PC-9 (cell line): ENCODE measurements at regions of chr6 and their contacts with region 1.

Region 1: DNA sequence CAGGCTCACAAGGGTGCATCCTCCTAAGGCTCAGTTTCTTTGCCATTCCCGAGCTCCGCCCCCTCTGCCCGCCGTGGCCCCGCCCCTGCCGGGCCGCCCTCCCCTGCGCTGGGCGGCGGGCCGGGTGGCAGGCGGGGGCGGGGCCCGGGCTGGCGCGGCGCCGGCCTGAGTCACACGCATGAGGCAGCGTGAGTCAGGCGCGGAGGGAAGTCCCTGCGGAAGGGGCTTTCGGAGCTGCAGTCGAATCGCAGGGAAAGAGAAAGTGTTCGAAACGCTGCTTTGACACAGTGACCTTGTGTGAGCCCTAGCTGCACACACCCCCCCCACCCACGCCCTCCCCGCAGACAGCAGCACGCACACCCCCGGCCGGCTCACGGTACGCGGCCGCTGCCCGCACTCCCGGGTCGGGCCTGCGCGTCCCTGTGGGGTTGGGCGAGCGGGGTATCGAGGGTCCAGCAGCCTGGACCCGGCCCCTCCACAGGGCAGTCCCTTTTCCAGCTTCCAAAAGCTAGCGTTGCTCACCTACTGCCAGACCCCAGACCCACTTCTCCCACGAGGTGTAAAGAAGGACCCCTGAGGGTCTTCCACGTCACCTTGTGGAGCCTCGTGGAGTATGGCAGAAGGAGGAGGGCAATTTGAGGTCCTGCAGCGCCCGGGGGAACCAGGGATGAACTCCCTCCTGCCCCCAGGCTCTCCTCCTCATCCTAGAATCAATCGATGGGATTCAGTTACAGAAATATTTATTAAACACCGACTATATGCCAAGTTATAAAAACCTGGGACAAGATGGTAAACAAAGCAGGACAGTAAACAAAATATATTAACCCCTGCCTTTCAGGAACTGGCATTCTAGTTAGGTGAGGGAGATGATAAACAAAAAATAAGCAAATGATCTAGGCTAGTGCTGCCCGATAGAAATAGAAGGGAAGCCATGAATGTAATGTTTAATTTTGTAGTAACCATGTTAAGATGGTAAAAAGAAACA is 12.4 kb upstream of the HMGA1 start:
- DNase-seq: peak; percentile 90 to 93
- H3K4me3 ChIP-seq: peak overlapping the region; percentile 80
- H3K27ac ChIP-seq: peak overlapping the region; percentile 98
- H3K4me1 ChIP-seq: peaks cover 60% of the 10 kb centered on the region
- H3K27me3 ChIP-seq: no peaks in the 10 kb centered on the region
- CTCF ChIP-seq: no peak

Region 2: DNA sequence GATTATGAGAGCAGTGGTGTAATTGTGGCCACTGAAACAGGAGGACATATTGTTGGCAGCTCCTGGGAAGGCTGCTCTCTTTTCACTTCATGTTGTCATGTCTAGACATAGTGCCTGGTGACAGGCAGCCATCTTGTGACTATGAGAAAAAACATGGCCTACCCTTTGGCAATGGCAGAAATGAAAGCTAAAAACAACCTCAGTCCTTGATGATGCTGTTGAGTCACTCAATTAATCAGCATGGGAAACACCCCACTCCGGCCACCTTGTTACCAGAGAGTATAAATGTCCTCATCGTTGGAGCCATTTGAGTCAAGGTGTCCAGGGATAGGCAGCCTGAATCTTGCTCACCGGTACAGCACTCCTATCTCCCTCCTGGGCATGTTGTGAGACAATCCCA is 18.8 kb before region 1 on chr6:
- CTCF ChIA-PET with region 1: no interaction called
- POLR2A ChIA-PET with region 1: interaction called, 13 read pairs
- intact Hi-C with region 1: no loop called
- DNase-seq: no peak
- H3K4me3 ChIP-seq: no peak overlapping the region
- H3K27ac ChIP-seq: no peak overlapping the region
- H3K4me1 ChIP-seq: no peaks in the 10 kb centered on the region
- H3K27me3 ChIP-seq: no peaks in the 10 kb centered on the region
- CTCF ChIP-seq: no peak

Region 3: GRCh38 chr6:34656378-34657036 is 432.3 kb after region 1 on chr6:
- CTCF ChIA-PET with region 1: no interaction called
- POLR2A ChIA-PET with region 1: no interaction called
- intact Hi-C with region 1: no loop called
- DNase-seq: peak in 1 of 2 experiments; percentile 68
- H3K4me3 ChIP-seq: peak overlapping the region; percentile 54; the same call in 1 of the 2 replicates
- H3K27ac ChIP-seq: peak overlapping the region; percentile 96
- H3K4me1 ChIP-seq: peaks cover 54% of the 10 kb centered on the region
- H3K27me3 ChIP-seq: no peaks in the 10 kb centered on the region
- CTCF ChIP-seq: no peak